Esophagus squamous epithelium (tissue), 5 donors: ENCODE measurements at regions of chr10 and their contacts with region 1.

Region 1: GRCh38 chr10:110279407-110279986 is 25.2 kb downstream of the SMNDC1 start:
- DNase-seq: no peak
- H3K4me3 ChIP-seq: peak overlapping the region in 1 of 4 donors; percentile 14
- H3K27ac ChIP-seq: no peak overlapping the region
- H3K4me1 ChIP-seq: peaks cover 0 to 18% (median 5%) of the 10 kb centered on the region in 3 donors
- H3K27me3 ChIP-seq: no peaks in the 10 kb centered on the region
- CTCF ChIP-seq: peak; percentile 25 to 85 (median 76)
- POLR2A ChIP-seq: no peak

Region 2: GRCh38 chr10:110225756-110226542 is 53.5 kb before region 1 on chr10:
- intact Hi-C with region 1: loop called (anchors 10 kb)
- DNase-seq: peak; percentile 53
- H3K4me3 ChIP-seq: peak overlapping the region; percentile 62 to 96 (median 72)
- H3K27ac ChIP-seq: peak overlapping the region; percentile 85 to 98 (median 94)
- H3K4me1 ChIP-seq: peaks cover 16 to 56% (median 29%) of the 10 kb centered on the region in 3 donors
- H3K27me3 ChIP-seq: no peaks in the 10 kb centered on the region
- CTCF ChIP-seq: peak; percentile 30 to 90 (median 64)
- POLR2A ChIP-seq: peak in 2 of 4 donors; percentile 41 to 43

Region 3: GRCh38 chr10:110399163-110400094 is 119.9 kb after region 1 on chr10:
- intact Hi-C with region 1: no loop called
- DNase-seq: no peak
- H3K4me3 ChIP-seq: no peak overlapping the region
- H3K27ac ChIP-seq: peak overlapping the region; percentile 71 to 89 (median 83)
- H3K4me1 ChIP-seq: peaks cover 13 to 45% (median 21%) of the 10 kb centered on the region in 3 donors
- H3K27me3 ChIP-seq: no peaks in the 10 kb centered on the region
- CTCF ChIP-seq: no peak
- POLR2A ChIP-seq: no peak